Dendritic cell treated with granulocyte-macrophage colony-stimulating factor and Interleukin-4, amounts not matched to agents 40 ng/mL and 50 ng/mL, for 4 days (primary cell): ENCODE measurements at regions of chr22 and their contacts with region 1.

Region 1: GRCh38 chr22:41848468-41848867 is 15.6 kb downstream of the SREBF2 start:
- H3K4me3 Mint-ChIP-seq: no peak overlapping the region
- H3K27ac Mint-ChIP-seq: peak overlapping the region; percentile 55
- H3K4me1 Mint-ChIP-seq: peaks cover 61% of the 10 kb centered on the region
- H3K27me3 Mint-ChIP-seq: no peaks in the 10 kb centered on the region

Region 2: GRCh38 chr22:41725510-41726110 is 122.9 kb before region 1 on chr22:
- intact Hi-C with region 1: no loop called
- H3K4me3 Mint-ChIP-seq: no peak overlapping the region
- H3K27ac Mint-ChIP-seq: no peak overlapping the region
- H3K4me1 Mint-ChIP-seq: no peaks in the 10 kb centered on the region
- H3K27me3 Mint-ChIP-seq: peaks cover 2% of the 10 kb centered on the region

Region 3: DNA sequence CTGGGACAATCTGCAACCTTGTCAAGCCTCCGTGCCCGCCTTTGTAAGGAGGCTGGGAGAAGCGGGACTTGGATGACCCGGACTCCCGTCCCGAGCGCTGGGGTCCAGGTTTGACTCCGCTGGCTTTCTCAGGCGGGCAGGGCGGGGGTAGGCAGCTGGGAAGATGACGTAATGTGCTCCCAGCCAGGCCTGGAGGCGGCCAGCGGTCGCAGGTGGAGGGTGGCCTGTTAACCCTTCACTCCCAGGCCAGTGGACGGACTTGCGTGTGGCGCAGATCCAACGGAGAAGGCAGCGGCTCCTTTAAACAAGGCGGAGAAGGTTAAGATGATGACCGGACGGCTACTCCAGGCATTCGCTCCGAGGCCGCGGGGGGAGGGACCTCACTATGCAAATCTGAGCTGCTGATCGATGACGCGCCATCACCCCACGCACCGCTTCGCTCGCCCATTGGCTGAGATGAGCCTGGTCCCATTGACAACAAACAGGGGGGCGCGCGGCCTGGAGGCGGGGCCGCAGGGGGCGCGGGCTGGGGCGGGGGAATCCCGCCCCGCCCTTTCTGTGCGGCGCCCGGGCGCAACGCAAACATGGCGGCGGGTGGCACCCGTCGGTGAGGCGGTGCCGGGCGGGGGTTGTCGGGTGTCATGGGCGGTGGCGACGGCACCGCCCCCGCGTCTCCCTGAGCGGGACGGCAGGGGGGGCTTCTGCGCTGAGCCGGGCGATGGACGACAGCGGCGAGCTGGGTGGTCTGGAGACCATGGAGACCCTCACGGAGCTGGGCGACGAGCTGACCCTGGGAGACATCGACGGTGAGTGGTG is 15.7 kb before region 1 on chr22 and contains the start of gene SREBF2:
- intact Hi-C with region 1: loop called (anchors 2 kb)
- H3K4me3 Mint-ChIP-seq: peak within 1 kb of the TSS; percentile 97
- H3K27ac Mint-ChIP-seq: peak within 1 kb of the TSS; percentile 99
- H3K4me1 Mint-ChIP-seq: peaks cover 65% of the 10 kb centered on the region
- H3K27me3 Mint-ChIP-seq: no peaks in the 10 kb centered on the region

Region 4: DNA sequence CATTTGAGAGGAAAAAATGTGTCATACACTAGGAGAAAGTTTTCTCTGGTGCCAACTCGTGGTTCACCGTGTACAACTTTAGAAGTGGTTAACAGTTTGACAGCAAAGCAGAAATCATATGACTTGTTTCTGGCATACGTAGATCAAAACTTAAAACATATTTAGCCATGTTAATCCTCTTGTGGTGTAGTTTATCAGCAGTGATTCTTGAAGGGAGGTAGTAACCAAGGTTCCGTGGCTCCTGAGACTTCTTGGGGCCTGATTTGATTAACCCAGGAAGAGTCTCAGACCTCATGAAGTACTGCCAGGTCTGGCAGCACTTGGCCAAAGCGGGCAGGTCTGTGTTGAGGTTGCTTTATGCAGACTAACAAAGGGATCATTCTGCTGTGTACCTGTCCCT is 24.9 kb after region 1 on chr22:
- intact Hi-C with region 1: no loop called
- H3K4me3 Mint-ChIP-seq: no peak overlapping the region
- H3K27ac Mint-ChIP-seq: no peak overlapping the region
- H3K4me1 Mint-ChIP-seq: no peaks in the 10 kb centered on the region
- H3K27me3 Mint-ChIP-seq: no peaks in the 10 kb centered on the region